ENCODE measurements at regions of chr9 and their contacts with region 1.

Region 1: GRCh38 chr9:32571969-32572899 is 725 bp downstream of the NDUFB6 start:
- DNase-seq: peak; percentile 85
- H3K4me3 Mint-ChIP-seq: peak overlapping the region; percentile 98
- H3K27ac Mint-ChIP-seq: peak overlapping the region; percentile 95
- H3K4me1 Mint-ChIP-seq: peaks cover 27% of the 10 kb centered on the region
- H3K27me3 Mint-ChIP-seq: no peaks in the 10 kb centered on the region

Region 2: DNA sequence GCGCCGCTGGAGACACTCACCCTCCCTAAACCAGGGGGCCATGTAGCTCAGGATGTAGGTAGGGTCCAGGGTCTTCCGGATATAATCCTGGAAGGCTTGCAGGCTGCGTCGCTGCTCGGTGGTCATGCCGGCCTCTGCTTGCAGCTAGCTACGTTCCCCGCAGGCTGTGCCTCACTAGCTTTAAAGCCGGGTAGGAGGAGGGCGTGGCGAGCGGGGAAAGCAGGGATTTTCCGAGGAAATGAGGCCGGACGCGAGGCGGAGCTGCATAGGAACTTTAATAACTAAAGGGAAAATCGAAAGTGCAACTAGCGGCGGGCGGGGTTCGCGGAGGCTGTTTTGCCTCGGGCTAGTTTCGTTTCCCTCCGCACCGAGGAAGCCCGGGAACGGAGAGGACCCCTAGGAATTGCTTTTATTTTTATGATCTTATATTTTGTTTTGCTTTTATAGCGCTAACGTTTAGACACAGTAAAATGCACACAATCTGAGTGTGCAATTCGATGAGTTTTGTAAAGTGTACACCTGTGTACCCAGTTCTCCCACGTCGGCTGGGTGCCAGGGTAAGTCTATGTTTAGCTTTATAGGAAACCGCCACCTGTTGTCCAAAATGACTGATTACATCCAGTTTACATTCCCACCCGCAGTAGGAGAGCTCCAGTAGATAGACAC is 46.1 kb before region 1 on chr9 and contains the start of gene RIGI:
- CTCF ChIA-PET with region 1: interaction called, 29 read pairs
- POLR2A ChIA-PET with region 1: interaction called, 6 read pairs
- intact Hi-C with region 1: loop called (anchors 1 kb)
- DNase-seq: peak; percentile 89
- H3K4me3 Mint-ChIP-seq: peak within 1 kb of the TSS; percentile 82
- H3K27ac Mint-ChIP-seq: peak within 1 kb of the TSS; percentile 81
- H3K4me1 Mint-ChIP-seq: peaks cover 41% of the 10 kb centered on the region
- H3K27me3 Mint-ChIP-seq: no peaks in the 10 kb centered on the region
- total RNA-seq, gene RIGI: 10.6 to 11.7 TPM

Region 3: GRCh38 chr9:32558408-32558934 is 13.8 kb before region 1 on chr9:
- CTCF ChIA-PET with region 1: interaction called, 62 read pairs
- POLR2A ChIA-PET with region 1: interaction called, 15 read pairs
- intact Hi-C with region 1: no loop called
- DNase-seq: no peak
- H3K4me3 Mint-ChIP-seq: no peak overlapping the region
- H3K27ac Mint-ChIP-seq: no peak overlapping the region
- H3K4me1 Mint-ChIP-seq: peaks cover 24% of the 10 kb centered on the region
- H3K27me3 Mint-ChIP-seq: no peaks in the 10 kb centered on the region

Region 4: GRCh38 chr9:32741706-32742105 is 169.5 kb after region 1 on chr9:
- CTCF ChIA-PET with region 1: no interaction called
- POLR2A ChIA-PET with region 1: no interaction called
- intact Hi-C with region 1: no loop called
- DNase-seq: no peak
- H3K4me3 Mint-ChIP-seq: no peak overlapping the region
- H3K27ac Mint-ChIP-seq: no peak overlapping the region
- H3K4me1 Mint-ChIP-seq: no peaks in the 10 kb centered on the region
- H3K27me3 Mint-ChIP-seq: no peaks in the 10 kb centered on the region

Region 5: DNA sequence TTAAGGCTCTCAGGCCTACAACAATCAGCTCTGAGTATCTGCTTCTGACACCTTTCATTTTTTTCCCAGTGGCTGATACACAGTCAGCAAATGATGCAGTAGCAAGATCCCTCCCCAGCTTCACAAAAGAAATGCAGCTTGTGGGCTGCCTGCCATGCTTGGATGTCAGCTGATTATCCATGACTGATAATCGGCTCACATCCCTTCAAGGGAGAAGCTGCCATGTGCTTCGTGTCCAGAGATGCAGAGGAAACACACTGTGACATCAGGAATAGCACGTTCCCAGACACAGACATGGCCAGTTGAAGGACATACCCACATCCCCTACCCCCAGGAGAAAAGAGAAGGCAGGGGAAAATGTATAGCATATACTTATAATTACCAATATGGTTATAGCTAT is 239.0 kb after region 1 on chr9:
- CTCF ChIA-PET with region 1: no interaction called
- POLR2A ChIA-PET with region 1: no interaction called
- intact Hi-C with region 1: no loop called
- DNase-seq: no peak
- H3K4me3 Mint-ChIP-seq: no peak overlapping the region
- H3K27ac Mint-ChIP-seq: no peak overlapping the region
- H3K4me1 Mint-ChIP-seq: no peaks in the 10 kb centered on the region
- H3K27me3 Mint-ChIP-seq: no peaks in the 10 kb centered on the region

Region 6: DNA sequence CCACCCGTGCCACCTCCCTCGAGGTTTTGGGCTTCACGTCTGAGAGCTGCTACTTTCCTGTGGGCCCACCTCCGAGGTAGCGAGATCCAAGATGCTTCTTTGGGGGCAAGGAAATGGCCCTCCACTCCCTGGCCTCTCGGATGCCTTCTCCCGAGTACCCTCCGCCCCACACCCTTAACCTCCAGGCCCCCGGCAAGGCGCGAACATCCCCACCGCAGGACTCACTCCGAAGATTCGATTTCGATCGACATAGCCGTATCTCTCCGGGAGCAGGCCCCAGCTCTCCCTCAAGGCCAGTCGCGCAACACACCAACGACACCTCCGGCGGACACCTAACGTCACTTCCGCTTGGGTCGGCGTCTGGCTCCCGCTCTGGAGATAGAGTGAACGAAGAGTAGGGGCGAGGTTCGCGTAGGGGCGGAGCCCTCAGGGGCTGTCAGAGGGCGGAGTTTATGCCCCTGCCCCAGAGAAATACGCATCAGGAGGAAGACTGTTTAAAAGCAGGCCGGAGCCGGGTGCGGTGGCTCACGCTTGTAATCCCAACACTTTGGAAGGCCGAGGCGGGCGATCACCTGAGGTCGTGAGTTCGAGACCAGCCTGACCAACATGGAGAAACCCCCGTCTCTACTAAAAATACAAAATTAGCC is 504.2 kb after region 1 on chr9 and contains the start of gene SMU1:
- CTCF ChIA-PET with region 1: no interaction called
- POLR2A ChIA-PET with region 1: no interaction called
- intact Hi-C with region 1: loop called (anchors 1 kb)
- DNase-seq: peak; percentile 98
- H3K4me3 Mint-ChIP-seq: peak within 1 kb of the TSS; percentile 100
- H3K27ac Mint-ChIP-seq: peak within 1 kb of the TSS; percentile 99
- H3K4me1 Mint-ChIP-seq: peaks cover 42% of the 10 kb centered on the region
- H3K27me3 Mint-ChIP-seq: no peaks in the 10 kb centered on the region
- total RNA-seq, gene SMU1: 25.8 to 26.1 TPM

Region 7: GRCh38 chr9:33709269-33709668 is 1137.0 kb after region 1 on chr9:
- CTCF ChIA-PET with region 1: no interaction called
- POLR2A ChIA-PET with region 1: no interaction called
- intact Hi-C with region 1: no loop called
- DNase-seq: no peak
- H3K4me3 Mint-ChIP-seq: no peak overlapping the region
- H3K27ac Mint-ChIP-seq: no peak overlapping the region
- H3K4me1 Mint-ChIP-seq: no peaks in the 10 kb centered on the region
- H3K27me3 Mint-ChIP-seq: peaks cover 19% of the 10 kb centered on the region

Measured in activated CD4-positive, alpha-beta memory T cell treated with anti-CD3 and anti-CD28 coated beads for 36 hours (primary cell).